Posterior vena cava (tissue), 2 donors: ENCODE measurements at regions of chr9 and their contacts with region 1.

Region 1: DNA sequence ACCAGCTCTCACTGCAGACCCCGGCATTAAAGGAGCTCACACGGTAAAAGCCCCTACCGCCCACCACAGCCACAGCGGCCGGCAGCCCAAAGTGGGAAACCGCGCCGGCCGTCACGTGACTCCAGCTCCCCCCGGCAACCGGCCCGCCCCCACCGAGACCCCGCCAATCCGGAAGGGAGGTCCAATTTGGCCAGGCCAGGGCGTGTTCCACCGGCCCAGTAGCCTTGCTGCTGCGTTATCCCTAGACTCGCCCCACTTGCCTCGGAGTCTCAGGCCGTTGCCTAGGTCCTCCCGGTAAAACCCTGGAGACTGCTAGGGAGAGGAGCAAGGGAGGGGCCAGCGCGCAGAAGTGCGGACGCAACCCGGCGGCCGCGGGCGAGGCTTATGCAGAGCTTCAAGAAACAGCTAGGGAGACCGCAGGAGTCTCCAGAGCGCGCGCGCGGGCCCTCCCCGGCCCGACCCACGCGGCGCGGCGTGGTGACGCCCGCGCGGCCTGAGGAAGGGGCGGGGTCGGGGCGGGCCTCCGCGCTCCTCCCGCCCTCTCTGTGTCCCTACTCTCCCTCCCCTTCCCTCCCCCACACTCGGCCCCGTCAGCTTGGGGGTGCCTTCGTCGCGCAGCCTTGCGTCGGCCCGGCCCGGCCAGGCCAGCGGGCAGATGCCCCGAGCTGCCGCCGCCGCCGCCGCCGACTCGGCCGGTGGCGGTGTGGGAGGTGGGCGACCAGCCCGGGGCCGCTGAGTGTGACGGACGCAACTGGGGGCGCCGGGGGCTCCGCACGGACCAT is at the start of gene RIC1:
- DNase-seq: peak; percentile 97
- total RNA-seq, gene RIC1: 20.2 to 25.2 TPM

Region 2: GRCh38 chr9:5416962-5417361 is 211.8 kb before region 1 on chr9:
- intact Hi-C with region 1: no loop called
- DNase-seq: no peak

Region 3: GRCh38 chr9:6008169-6008979 is 379.7 kb after region 1 on chr9:
- intact Hi-C with region 1: loop called in 1 of 2 experiments (anchors 10 kb)
- DNase-seq: peak; percentile 98